ENCODE measurements at regions of chr3 and their contacts with region 1.

Region 1: GRCh38 chr3:111803123-111803593 is 55.9 kb upstream of the PHLDB2 start:
- DNase-seq: peak; percentile 97
- H3K4me3 Mint-ChIP-seq: peak overlapping the region; percentile 58
- H3K27ac Mint-ChIP-seq: peak overlapping the region; percentile 99
- H3K4me1 Mint-ChIP-seq: peaks cover 46% of the 10 kb centered on the region
- H3K27me3 Mint-ChIP-seq: no peaks in the 10 kb centered on the region
- CTCF ChIP-seq: no peak

Region 2: GRCh38 chr3:111723293-111724215 is 79.6 kb before region 1 on chr3:
- CTCF ChIA-PET with region 1: interaction called, 51 read pairs
- POLR2A ChIA-PET with region 1: interaction called, 26 read pairs
- intact Hi-C with region 1: no loop called
- DNase-seq: peak; percentile 76
- H3K4me3 Mint-ChIP-seq: no peak overlapping the region
- H3K27ac Mint-ChIP-seq: peak overlapping the region; percentile 86
- H3K4me1 Mint-ChIP-seq: peaks cover 19% of the 10 kb centered on the region
- H3K27me3 Mint-ChIP-seq: no peaks in the 10 kb centered on the region
- CTCF ChIP-seq: no peak

Region 3: DNA sequence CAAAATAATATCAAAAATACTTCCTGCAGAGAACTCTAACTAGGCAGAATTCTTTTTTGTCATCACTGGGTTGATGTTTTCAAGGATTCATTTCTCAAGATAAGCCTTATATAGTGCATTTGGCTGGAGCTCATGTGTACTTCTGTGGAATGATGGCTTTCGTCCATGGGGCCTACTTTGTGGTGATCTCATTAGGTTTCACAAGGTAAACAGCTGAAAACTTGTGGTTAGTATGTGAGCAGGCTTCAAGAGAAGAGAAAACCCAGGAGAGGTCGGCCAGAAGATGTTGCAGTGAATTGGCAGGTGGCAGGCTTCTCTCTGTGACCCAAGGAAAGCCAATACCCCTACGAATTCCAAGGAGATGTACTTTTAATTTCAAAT is 65.5 kb before region 1 on chr3:
- CTCF ChIA-PET with region 1: interaction called, 6 read pairs
- POLR2A ChIA-PET with region 1: interaction called, 135 read pairs
- intact Hi-C with region 1: loop called (anchors 1 kb)
- DNase-seq: peak; percentile 89
- H3K4me3 Mint-ChIP-seq: no peak overlapping the region
- H3K27ac Mint-ChIP-seq: peak overlapping the region; percentile 58
- H3K4me1 Mint-ChIP-seq: peaks cover 40% of the 10 kb centered on the region
- H3K27me3 Mint-ChIP-seq: no peaks in the 10 kb centered on the region
- CTCF ChIP-seq: no peak

Region 4: DNA sequence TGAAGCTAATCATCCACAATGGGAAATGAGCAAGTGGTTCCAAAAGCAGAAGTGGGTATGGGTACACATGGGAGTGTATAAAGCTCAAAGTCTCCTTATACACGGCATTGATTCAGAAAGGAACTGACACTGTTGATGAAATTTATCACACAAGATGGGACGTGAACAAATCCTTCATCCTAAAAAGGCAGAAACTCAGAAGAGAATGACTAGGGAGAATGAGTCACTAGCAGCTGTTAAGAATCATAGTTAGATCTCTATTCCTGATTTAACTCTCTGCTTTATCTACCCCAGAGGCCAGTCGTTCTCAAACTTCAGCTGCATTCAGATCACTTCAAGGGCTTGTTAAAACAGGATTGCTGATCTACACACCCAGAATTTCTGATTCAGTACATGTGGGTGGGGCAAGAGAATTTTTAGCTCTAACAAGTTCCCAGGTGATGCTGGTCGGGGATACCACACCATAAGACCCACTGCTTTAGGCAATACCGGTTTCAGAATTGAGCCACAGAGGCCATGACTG is 41.8 kb before region 1 on chr3:
- CTCF ChIA-PET with region 1: interaction called, 8 read pairs
- POLR2A ChIA-PET with region 1: interaction called, 84 read pairs
- intact Hi-C with region 1: loop called (anchors 1 kb)
- DNase-seq: peak; percentile 73
- H3K4me3 Mint-ChIP-seq: peak overlapping the region; percentile 45
- H3K27ac Mint-ChIP-seq: peak overlapping the region; percentile 96
- H3K4me1 Mint-ChIP-seq: peaks cover 30% of the 10 kb centered on the region
- H3K27me3 Mint-ChIP-seq: no peaks in the 10 kb centered on the region
- CTCF ChIP-seq: no peak

Region 5: GRCh38 chr3:111851511-111851954 is 48.4 kb after region 1 on chr3:
- CTCF ChIA-PET with region 1: no interaction called
- POLR2A ChIA-PET with region 1: interaction called, 60 read pairs
- intact Hi-C with region 1: loop called (anchors 2 kb)
- DNase-seq: peak; percentile 87
- H3K4me3 Mint-ChIP-seq: no peak overlapping the region
- H3K27ac Mint-ChIP-seq: peak overlapping the region; percentile 77
- H3K4me1 Mint-ChIP-seq: peaks cover 37% of the 10 kb centered on the region
- H3K27me3 Mint-ChIP-seq: no peaks in the 10 kb centered on the region
- CTCF ChIP-seq: no peak

Region 6: DNA sequence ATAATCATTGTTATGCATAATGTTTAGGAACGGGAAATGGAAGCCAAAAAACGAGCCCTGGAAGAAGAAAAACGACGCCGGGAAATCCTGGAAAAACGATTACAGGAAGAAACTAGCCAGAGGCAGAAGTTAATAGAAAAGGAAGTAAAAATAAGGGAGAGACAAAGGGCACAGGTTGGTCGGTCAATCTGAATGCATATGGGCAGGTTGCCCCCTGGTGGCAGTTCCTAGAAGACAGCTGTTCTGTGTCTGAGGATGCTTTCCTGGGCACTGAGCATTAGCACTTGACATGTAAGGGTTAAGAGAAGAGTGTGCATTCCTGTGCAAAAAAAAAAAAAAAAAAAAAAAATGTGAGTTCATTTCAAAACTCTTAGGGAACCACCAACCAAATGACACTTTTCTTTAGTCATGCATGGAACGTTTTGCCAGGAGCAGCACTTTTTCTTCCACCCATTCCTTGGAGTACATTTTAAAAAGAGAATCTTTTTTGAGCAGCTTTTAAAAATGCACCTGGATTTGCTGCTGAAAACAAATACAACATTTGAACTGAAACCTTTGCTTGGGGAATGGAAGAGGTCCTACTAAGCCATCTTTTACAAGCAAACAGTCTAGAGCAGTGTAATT is 164.6 kb after region 1 on chr3:
- CTCF ChIA-PET with region 1: interaction called, 4 read pairs
- POLR2A ChIA-PET with region 1: interaction called, 6 read pairs
- intact Hi-C with region 1: loop called (anchors 1 kb)
- DNase-seq: peak; percentile 86
- H3K4me3 Mint-ChIP-seq: no peak overlapping the region
- H3K27ac Mint-ChIP-seq: peak overlapping the region; percentile 5
- H3K4me1 Mint-ChIP-seq: peaks cover 11% of the 10 kb centered on the region
- H3K27me3 Mint-ChIP-seq: no peaks in the 10 kb centered on the region
- CTCF ChIP-seq: peak; percentile 86

Region 7: GRCh38 chr3:112132975-112133448 is 329.9 kb after region 1 on chr3 and contains the start of gene GCSAM:
- CTCF ChIA-PET with region 1: no interaction called
- POLR2A ChIA-PET with region 1: no interaction called
- intact Hi-C with region 1: no loop called
- DNase-seq: peak; percentile 80
- H3K4me3 Mint-ChIP-seq: peak within 1 kb of the TSS; percentile 75
- H3K27ac Mint-ChIP-seq: peak within 1 kb of the TSS; percentile 71
- H3K4me1 Mint-ChIP-seq: peaks cover 45% of the 10 kb centered on the region
- H3K27me3 Mint-ChIP-seq: no peaks in the 10 kb centered on the region
- CTCF ChIP-seq: no peak
- total RNA-seq, gene GCSAM: 0.29 and 0.63 TPM in 2 replicates